ENCODE measurements at regions of chr17 and their contacts with region 1.

Region 1: GRCh38 chr17:79607940-79608623 is 2.8 kb downstream of the RBFOX3 start:
- DNase-seq: peak; percentile 55 to 63
- H3K4me3 ChIP-seq: peak overlapping the region; percentile 14; the same call in 1 of the 2 replicates
- H3K4me3 Mint-ChIP-seq: no peak overlapping the region
- H3K27ac Mint-ChIP-seq: no peak overlapping the region
- H3K4me1 ChIP-seq: peaks cover 7% of the 10 kb centered on the region
- H3K4me1 Mint-ChIP-seq: peaks cover 6% of the 10 kb centered on the region
- H3K27me3 ChIP-seq: no peaks in the 10 kb centered on the region
- H3K27me3 Mint-ChIP-seq: peaks cover 5% of the 10 kb centered on the region
- CTCF ChIP-seq: peak in 1 of 2 experiments; percentile 32

Region 2: DNA sequence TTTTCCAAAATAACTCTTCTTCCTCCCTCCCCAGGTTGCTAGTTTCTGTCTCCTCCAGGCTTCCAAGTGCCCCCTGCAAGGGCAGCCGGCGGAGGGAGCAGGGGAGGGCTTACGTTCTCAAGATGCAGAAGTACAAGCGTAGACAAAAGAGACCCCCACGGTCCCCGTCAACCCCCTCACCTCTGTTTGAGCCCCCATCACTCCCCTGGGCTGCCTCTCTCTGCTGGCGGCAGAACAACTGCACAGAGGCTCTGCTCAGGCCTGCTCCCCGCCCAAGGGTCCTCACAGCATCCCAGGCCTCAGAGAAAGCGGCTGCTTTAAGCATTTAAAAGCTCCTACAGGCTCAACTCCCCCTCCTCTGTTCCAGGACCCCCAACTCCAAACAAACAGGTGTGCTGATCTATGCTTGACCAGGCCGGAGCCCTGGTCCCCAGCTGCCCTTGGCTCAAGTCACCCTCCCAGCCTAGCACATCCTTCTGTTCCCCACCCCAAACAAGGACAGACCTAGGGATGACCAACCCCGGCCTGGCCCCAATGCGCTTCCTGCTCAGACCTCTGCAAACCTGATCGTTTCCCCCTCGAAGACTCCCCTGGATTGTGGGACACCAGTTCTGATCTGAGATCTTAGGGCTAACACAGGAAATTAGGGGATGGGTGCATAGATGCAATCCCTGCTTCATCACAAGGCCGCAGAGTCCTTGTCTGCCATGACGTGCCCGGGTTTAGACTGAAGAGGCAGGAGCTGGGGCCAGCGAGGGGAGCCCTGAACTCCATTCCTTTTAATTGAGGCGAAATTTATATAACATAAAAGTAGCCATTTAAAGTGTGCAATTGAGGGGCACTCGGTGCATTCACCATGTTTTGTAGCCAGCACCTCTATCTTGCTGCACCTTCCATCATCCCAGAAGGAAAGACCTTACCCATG is 19.9 kb after region 1 on chr17:
- CTCF ChIA-PET with region 1: no interaction called
- POLR2A ChIA-PET with region 1: no interaction called
- intact Hi-C with region 1: loop called (anchors 2 kb)
- DNase-seq: peak in 1 of 2 experiments; percentile 21
- H3K4me3 ChIP-seq: no peak overlapping the region
- H3K4me3 Mint-ChIP-seq: peak overlapping the region; percentile 24
- H3K27ac Mint-ChIP-seq: peak overlapping the region; percentile 86
- H3K4me1 ChIP-seq: peaks cover 71% of the 10 kb centered on the region
- H3K4me1 Mint-ChIP-seq: peaks cover 49% of the 10 kb centered on the region
- H3K27me3 ChIP-seq: no peaks in the 10 kb centered on the region
- H3K27me3 Mint-ChIP-seq: no peaks in the 10 kb centered on the region
- CTCF ChIP-seq: no peak

Measured in Caco-2 (cell line).